ENCODE measurements at regions of chr18 and their contacts with region 1.

Region 1: DNA sequence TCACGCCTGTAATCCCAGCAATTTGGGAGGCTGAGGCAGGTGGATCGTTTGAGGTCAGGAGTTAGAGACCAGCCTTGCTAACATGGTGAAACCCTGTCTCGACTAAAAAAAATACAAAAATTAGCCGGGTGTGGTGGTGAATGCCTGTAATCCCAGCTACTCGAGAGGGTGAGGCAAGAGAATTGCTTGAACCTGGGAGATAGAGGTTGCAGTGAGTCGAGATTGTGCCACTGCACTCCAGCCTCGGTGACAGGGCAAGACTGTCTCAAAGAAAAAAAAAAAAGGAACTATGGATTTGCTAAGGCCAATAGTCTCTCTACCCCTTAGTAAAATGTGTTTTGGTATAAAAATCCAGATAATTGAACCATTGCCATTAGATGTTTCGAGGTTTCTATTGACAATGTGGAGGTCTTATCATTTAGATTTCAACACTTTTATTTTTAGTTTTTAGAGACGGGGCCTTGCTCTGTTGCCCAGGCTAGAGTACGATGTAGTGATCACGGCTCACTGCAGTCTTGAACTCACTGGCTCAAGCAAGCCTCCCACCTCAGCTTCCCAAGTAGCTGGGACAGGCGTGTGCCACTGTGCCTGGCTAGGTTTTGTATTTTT is 1.1 kb upstream of the TXNDC2 start:
- DNase-seq: no peak

Region 2: DNA sequence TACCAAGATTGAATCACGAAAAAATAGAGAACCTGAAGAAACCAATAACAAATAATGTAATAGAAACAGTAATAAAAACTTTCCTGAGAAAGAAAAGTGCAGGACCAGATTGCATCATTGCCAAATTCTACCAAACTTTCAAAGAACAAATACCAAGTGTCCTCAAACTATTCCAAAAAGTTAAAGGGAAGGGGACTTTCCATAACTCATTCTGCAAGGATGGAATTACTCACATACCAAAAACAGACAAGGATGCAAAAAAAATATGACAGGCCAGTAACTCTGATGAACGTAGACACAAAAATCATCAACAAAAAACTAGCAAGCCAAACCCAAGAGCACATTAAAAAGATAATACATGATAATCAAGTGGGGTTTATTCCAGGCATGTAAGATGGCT is 1552.4 kb after region 1 on chr18:
- intact Hi-C with region 1: loop called in 1 of 2 experiments (anchors 5 kb)
- DNase-seq: no peak